BJ (cell line): ENCODE measurements at regions of chr5 and their contacts with region 1.

Region 1: GRCh38 chr5:142881076-142881783 is 111.1 kb downstream of the ARHGAP26 start:
- DNase-seq: peak; percentile 48
- H3K4me3 ChIP-seq: no peak overlapping the region
- H3K27me3 ChIP-seq: no peaks in the 10 kb centered on the region
- CTCF ChIP-seq: no peak

Region 2: GRCh38 chr5:142740474-142741242 is 140.6 kb before region 1 on chr5:
- CTCF ChIA-PET with region 1: interaction called, 27 read pairs
- POLR2A ChIA-PET with region 1: no interaction called
- DNase-seq: peak; percentile 77
- H3K4me3 ChIP-seq: no peak overlapping the region
- H3K27me3 ChIP-seq: no peaks in the 10 kb centered on the region
- CTCF ChIP-seq: no peak

Region 3: DNA sequence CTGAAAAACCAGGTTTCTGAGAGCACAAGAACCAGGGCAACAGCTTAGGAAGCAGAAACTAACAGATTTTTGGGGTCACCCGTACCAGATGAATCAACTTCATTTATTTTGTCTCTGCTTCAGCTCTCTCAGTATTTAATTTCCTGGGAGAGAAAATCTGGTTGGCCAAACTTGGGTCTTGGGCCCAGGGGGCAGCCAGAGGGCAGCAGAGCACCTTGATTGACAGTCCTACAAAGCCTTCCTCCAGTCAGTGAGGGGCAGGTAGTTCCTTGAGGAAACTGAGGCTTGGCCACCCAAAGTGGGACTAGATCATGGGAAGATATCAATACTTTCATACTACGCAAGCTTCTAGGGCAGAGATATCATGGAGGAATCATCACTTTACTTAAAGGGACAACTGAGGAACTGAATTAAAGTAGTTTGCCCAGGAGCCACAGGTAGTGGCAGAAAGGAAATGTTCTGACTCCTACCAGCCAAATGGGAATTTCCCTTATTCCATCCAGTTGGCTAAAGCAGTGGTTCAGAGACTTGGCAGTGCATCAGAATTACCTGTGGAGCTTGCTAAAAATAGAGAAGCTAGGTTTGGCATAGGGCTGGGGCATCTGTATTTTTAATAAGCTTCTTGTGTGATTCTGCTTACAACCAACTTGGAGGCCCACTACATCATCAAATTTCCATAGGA is 132.5 kb before region 1 on chr5:
- CTCF ChIA-PET with region 1: interaction called, 16 read pairs
- POLR2A ChIA-PET with region 1: no interaction called
- DNase-seq: no peak
- H3K4me3 ChIP-seq: no peak overlapping the region
- H3K27me3 ChIP-seq: no peaks in the 10 kb centered on the region
- CTCF ChIP-seq: 0 out of 2 replicates have a peak, but pooled peaks have one; percentile 18

Region 4: DNA sequence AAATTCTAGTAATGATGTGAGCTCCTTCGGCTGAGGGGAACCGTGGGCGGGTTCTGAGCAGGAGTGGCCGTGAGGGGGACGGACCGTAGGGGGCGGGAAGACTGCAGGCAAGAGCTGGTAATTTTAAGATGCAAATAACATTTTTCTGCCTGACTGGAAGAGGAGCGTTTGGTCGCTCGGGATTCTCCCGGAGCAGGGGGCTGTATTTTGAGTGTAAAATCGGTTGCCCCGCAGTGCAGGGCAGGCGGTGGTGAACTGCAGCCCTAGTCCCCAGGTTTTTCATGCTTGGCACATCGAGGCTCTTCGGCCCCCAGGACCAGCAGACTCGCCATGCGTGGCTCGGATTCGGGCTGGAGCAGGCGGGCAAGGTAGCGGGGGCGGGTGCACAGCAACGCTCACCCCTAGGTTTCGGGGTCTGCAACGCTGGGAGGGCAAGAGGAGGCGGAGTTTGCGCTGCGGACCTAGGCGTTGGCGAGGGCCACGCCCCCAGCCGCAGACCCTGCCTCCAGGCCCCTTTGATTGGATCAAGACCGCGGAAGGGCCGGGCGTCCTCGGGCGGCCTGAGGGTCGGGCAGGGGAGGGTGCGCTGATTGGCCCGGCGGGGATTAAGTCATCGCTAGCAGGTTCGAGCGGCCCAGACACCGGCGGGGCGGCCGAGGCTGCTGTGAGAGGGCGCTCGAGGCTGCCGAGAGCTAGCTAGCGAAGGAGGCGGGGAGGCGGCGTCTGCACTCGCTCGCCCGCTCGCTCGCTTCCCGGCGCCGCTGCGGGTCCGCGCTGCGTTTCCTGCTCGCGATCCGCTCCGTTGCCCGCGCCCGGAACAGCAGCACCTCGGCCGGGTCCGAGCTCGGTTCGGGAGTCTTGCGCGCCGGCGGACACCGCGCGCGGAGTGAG is 111.2 kb before region 1 on chr5 and contains the start of gene ARHGAP26:
- CTCF ChIA-PET with region 1: interaction called, 21 read pairs
- POLR2A ChIA-PET with region 1: no interaction called
- DNase-seq: peak; percentile 67
- H3K4me3 ChIP-seq: peak within 1 kb of the TSS; percentile 65
- H3K27me3 ChIP-seq: 0 out of 2 replicates have a peak, but pooled peaks cover 7% of the 10 kb centered on the region
- CTCF ChIP-seq: peak; percentile 47
- polyA plus RNA-seq, gene ARHGAP26: 4.8 TPM in 2 replicates

Region 5: DNA sequence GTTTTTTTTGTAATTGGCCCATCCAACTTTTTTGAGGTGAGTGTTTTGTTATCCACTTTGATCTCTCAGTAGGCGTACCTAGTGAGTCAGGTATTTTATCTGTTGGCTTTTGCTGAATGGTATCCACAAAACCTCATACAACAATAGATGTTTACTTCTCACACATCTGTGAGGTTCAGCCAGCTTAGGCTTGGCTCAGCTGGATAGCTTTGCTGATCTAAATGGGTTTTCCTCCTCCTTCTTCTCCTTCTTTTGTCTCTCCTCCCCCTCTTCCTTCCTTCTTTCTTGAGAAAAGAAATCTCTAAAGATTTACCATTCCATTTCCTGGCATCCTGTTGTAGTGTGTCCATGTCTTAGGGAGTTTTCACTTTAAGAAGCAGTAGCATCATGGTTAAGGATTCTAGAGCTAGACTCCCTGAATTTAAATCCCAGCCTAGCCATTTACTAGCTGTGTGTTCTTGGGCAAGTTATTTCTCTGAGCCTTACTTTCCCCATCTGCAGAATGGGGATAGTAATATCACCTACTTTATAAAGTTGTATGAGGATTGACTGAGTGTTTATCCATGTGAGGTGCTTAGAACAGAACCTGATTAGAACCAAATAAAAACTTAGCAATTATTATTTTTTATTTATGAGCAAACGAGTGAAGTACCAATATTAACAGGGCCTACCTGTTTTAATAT is 15.2 kb after region 1 on chr5:
- CTCF ChIA-PET with region 1: interaction called, 26 read pairs
- POLR2A ChIA-PET with region 1: no interaction called
- DNase-seq: no peak
- H3K4me3 ChIP-seq: no peak overlapping the region
- H3K27me3 ChIP-seq: no peaks in the 10 kb centered on the region; the same call in 1 of the 2 replicates
- CTCF ChIP-seq: no peak